ENCODE measurements at regions of chr2 and their contacts with region 1.

Region 1: GRCh38 chr2:138564586-138565241 is 63.1 kb downstream of the SPOPL start:
- DNase-seq: no peak
- ATAC-seq: peak in 1 of 4 donors; percentile 55
- H3K4me3 ChIP-seq: no peak overlapping the region
- H3K27ac ChIP-seq: no peak overlapping the region
- H3K4me1 ChIP-seq: no peaks in the 10 kb centered on the region
- H3K27me3 ChIP-seq: no peaks in the 10 kb centered on the region
- CTCF ChIP-seq: no peak
- POLR2A ChIP-seq: no peak

Region 2: DNA sequence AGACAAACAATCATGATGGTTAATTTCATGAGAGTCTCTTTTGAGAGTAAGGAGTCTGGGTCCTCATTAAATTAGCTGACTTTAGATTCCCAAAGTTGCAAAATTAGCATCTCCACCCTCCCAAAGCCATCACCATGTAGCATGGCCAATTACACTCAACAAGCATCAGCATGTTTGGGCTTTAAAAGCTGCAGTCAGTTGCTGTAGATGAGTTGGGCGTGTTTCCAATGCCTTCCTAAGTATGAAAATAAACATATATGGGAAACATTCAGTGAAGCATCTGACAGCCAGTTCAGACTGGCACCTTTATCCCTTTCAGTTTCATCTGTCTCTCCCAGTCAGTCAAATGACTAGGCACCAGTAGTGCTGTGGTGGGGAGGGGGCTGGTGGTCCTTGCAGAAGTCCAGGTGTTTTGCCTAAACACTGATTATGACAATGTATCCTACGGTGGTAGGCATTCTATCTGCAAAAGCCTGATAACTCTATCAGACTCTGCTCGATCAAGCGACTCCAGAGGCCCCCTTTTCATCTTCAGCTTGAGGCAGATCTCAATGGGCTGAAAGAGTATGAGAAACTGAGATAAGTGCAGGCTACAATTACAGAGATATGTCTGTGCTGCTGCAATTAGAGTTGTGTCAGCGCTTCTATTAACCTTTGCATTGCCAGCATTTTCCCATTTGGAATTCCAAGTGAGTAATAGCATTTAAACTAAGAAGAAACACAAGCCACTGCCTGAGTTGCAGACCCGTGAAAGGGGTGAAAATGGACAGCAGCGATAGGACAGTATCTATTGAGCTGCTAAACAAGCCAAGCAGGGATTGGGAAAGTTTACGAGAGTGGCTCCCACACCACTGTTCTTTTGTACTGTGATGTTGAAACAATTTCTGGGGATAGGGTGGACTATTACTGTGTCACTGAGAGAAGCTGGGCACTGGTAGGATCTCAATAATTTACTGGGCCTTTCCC is 130.4 kb before region 1 on chr2:
- intact Hi-C with region 1: no loop called
- DNase-seq: no peak
- ATAC-seq: no peak
- H3K4me3 ChIP-seq: no peak overlapping the region
- H3K27ac ChIP-seq: no peak overlapping the region
- H3K4me1 ChIP-seq: no peaks in the 10 kb centered on the region
- H3K27me3 ChIP-seq: no peaks in the 10 kb centered on the region
- CTCF ChIP-seq: no peak
- POLR2A ChIP-seq: no peak

Region 3: DNA sequence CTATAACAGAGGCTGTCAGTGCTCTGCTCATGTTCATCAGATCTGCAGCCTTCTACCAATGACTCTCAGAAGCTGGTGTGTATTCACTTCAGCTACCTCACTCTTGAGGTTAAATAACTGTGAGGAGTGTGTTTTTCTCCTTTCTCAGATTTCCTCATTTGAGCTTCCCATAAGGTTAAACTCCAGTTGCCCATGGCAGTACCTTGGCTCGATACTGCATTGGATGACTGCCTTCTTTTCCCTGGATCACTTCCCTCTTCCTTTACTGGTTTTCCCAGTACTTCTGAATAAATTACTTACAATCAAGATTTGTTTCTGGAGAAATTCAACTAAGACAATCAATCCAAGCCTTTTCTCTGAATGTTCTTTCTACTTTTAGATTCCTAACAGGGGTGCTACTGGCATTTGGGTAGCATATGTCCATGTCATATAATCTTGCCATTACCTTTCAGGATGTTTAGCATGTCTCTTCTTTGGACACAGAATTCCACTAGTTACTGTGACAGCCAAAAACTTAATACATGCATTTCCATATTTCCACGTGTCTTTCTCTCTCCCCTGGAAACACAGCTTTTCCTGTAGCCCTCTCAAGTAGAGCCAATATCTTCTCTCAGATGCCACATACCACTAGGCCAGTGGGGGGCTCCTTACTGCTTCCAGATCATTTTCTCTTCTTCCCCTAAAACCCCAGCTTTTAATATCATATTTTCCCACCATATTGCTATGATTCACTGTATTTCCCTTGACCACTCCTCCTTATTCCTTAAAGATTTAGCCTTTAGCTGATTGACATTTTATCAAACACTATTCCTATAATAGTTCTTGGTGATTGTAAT is 78.1 kb before region 1 on chr2:
- intact Hi-C with region 1: no loop called
- DNase-seq: no peak
- ATAC-seq: no peak
- H3K4me3 ChIP-seq: no peak overlapping the region
- H3K27ac ChIP-seq: no peak overlapping the region
- H3K4me1 ChIP-seq: no peaks in the 10 kb centered on the region
- H3K27me3 ChIP-seq: no peaks in the 10 kb centered on the region
- CTCF ChIP-seq: no peak
- POLR2A ChIP-seq: no peak

Region 4: GRCh38 chr2:138516030-138516704 is 48.5 kb before region 1 on chr2:
- intact Hi-C with region 1: loop called in 1 of 10 experiments (anchors 5 kb)
- DNase-seq: no peak
- ATAC-seq: no peak
- H3K4me3 ChIP-seq: no peak overlapping the region
- H3K27ac ChIP-seq: no peak overlapping the region
- H3K4me1 ChIP-seq: peaks cover 0 to 47% (median 15%) of the 10 kb centered on the region in 12 donors
- H3K27me3 ChIP-seq: no peaks in the 10 kb centered on the region
- CTCF ChIP-seq: no peak
- POLR2A ChIP-seq: no peak